Sciatic nerve (tissue), 2 donors: ENCODE measurements at regions of chr9 and their contacts with region 1.

Region 1: GRCh38 chr9:121966706-121967105 is 126.4 kb downstream of the TTLL11 start:
- DNase-seq: no peak
- ATAC-seq: no peak

Region 2: DNA sequence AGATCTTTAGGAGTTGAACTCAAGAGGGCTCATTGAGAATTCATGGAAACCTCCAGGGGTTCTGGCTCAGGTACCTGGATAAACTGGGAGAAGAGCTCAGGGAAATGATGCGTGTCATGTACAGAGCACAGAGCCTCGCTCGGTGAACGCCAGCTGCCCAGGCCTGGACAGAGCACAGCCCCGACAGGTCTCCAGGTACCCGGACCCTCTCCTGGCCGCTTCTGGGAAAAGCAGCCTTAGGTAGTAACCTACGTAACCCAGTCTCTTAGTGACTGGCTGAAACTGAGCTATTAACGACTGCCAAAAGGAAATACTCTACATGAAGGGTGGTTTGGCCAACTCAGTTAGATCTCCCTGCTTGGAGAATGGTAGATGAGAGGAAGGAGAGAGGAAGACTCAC is 31.0 kb before region 1 on chr9:
- intact Hi-C with region 1: loop called (anchors 2 kb)
- DNase-seq: no peak
- ATAC-seq: no peak